CD4-positive, alpha-beta T cell (primary cell): ENCODE measurements at regions of chr6 and their contacts with region 1.

Region 1: GRCh38 chr6:26156076-26156849 is 69.0 kb downstream of the HFE start:
- DNase-seq: peak; percentile 76 to 94 (median 88)
- ATAC-seq: peak; percentile 33
- H3K4me3 ChIP-seq: peak overlapping the region; percentile 92
- H3K4me3 Mint-ChIP-seq: peak overlapping the region; percentile 99
- H3K27ac ChIP-seq: peak overlapping the region; percentile 67 to 91
- H3K27ac Mint-ChIP-seq: peak overlapping the region; percentile 97
- H3K4me1 ChIP-seq: peaks cover 37% of the 10 kb centered on the region
- H3K4me1 Mint-ChIP-seq: peaks cover 40% of the 10 kb centered on the region
- H3K27me3 ChIP-seq: no peaks in the 10 kb centered on the region
- H3K27me3 Mint-ChIP-seq: peaks cover 12% of the 10 kb centered on the region
- CTCF ChIP-seq: no peak

Region 2: GRCh38 chr6:26031595-26032339 is 124.5 kb before region 1 on chr6:
- CTCF ChIA-PET with region 1: no interaction called
- POLR2A ChIA-PET with region 1: interaction called, 161 read pairs
- intact Hi-C with region 1: loop called in 1 of 2 experiments (anchors 2 kb)
- DNase-seq: peak; percentile 73 to 94 (median 81)
- ATAC-seq: peak; percentile 65
- H3K4me3 ChIP-seq: peak overlapping the region; percentile 64
- H3K4me3 Mint-ChIP-seq: peak overlapping the region; percentile 97
- H3K27ac ChIP-seq: peak overlapping the region; percentile 42 to 72
- H3K27ac Mint-ChIP-seq: peak overlapping the region; percentile 99
- H3K4me1 ChIP-seq: peaks cover 35% of the 10 kb centered on the region
- H3K4me1 Mint-ChIP-seq: peaks cover 46% of the 10 kb centered on the region
- H3K27me3 ChIP-seq: no peaks in the 10 kb centered on the region
- H3K27me3 Mint-ChIP-seq: no peaks in the 10 kb centered on the region
- CTCF ChIP-seq: peak; percentile 22

Region 3: DNA sequence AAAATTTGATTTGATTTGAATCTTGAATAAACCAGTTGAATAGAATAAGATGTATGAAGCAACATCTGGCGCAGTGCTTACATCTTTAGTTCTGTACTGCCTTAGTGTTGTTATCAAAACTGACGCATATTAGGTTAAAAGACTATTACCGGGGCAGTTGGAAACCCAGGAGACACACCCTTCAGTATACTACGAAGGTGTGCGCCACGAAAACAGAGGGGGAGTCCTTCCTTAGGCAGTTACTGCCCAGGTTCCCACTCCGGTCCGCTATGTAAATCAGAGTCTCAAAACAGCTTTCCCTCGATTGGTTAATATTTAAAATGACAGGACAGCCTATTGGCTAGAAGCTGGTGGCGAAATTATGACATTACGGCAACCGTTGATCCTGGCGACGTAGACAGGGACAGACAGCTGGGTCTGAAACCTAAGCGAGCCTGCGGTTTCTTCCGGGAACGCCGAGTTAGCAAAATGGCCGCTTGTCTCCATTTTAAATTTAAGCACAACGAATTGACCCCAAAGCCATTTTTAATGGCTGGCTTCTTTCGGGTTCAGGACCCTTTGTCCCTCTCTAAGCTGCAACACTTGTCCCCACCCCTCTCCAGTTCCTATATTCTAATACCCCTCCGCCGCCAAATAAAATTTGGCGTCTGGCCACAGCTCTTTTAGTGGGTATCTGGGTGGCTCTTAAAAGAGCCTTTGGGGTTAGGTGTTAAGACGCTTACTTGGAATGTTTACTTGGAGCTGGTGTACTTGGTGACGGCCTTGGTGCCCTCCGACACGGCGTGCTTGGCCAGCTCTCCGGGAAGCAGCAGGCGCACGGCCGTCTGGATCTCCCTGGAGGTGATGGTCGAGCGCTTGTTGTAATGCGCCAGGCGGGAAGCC is 33.2 kb before region 1 on chr6:
- CTCF ChIA-PET with region 1: interaction called, 28 read pairs
- POLR2A ChIA-PET with region 1: interaction called, 3,030 read pairs
- intact Hi-C with region 1: loop called (anchors 1 kb)
- DNase-seq: peak; percentile 75 to 98 (median 92)
- ATAC-seq: peak; percentile 56
- H3K4me3 ChIP-seq: peak overlapping the region; percentile 88
- H3K4me3 Mint-ChIP-seq: peak overlapping the region; percentile 97
- H3K27ac ChIP-seq: peak overlapping the region; percentile 84 to 95
- H3K27ac Mint-ChIP-seq: peak overlapping the region; percentile 98
- H3K4me1 ChIP-seq: peaks cover 23% of the 10 kb centered on the region
- H3K4me1 Mint-ChIP-seq: peaks cover 41% of the 10 kb centered on the region
- H3K27me3 ChIP-seq: no peaks in the 10 kb centered on the region
- H3K27me3 Mint-ChIP-seq: peaks cover 13% of the 10 kb centered on the region
- CTCF ChIP-seq: no peak

Region 4: DNA sequence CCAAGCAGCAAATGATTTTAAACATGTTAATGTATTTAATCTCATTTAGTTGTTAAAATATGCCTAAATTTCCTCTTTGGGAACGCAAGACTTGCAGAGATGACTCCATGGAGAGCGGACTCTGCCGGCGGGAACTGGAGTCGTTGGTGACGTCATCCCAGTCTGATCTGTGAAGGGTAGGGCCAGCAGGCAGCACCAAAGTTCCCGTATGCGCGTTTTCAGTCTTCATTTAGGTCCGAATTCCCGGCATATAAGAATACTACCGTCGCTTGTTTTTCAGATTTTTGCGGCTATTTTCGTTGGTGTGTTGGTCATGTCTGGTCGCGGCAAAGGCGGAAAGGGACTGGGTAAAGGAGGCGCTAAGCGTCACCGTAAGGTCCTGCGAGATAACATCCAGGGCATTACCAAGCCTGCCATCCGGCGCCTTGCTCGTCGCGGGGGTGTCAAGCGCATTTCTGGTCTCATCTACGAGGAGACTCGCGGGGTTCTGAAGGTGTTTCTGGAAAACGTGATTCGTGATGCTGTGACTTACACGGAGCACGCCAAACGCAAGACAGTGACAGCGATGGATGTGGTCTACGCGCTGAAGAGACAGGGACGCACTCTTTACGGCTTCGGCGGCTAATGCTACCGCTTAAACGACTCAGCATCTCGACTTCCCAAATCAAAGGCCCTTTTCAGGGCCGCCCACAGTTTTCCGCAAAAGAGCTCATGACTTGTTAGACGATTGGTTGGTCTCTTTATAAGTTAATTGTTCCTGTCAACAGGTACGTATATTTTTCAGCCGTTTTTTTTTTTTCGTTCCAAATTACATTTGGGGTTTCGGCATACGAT is 48.3 kb after region 1 on chr6:
- CTCF ChIA-PET with region 1: interaction called, 3 read pairs
- POLR2A ChIA-PET with region 1: interaction called, 1,305 read pairs
- intact Hi-C with region 1: loop called (anchors 1 to 2 kb)
- DNase-seq: peak; percentile 73 to 98 (median 80)
- ATAC-seq: peak; percentile 69
- H3K4me3 ChIP-seq: peak overlapping the region; percentile 68
- H3K4me3 Mint-ChIP-seq: no peak overlapping the region
- H3K27ac ChIP-seq: peak overlapping the region; percentile 89 to 90
- H3K27ac Mint-ChIP-seq: no peak overlapping the region
- H3K4me1 ChIP-seq: peaks cover 34% of the 10 kb centered on the region
- H3K4me1 Mint-ChIP-seq: peaks cover 8% of the 10 kb centered on the region
- H3K27me3 ChIP-seq: no peaks in the 10 kb centered on the region
- H3K27me3 Mint-ChIP-seq: no peaks in the 10 kb centered on the region
- CTCF ChIP-seq: peak; percentile 32

Region 5: DNA sequence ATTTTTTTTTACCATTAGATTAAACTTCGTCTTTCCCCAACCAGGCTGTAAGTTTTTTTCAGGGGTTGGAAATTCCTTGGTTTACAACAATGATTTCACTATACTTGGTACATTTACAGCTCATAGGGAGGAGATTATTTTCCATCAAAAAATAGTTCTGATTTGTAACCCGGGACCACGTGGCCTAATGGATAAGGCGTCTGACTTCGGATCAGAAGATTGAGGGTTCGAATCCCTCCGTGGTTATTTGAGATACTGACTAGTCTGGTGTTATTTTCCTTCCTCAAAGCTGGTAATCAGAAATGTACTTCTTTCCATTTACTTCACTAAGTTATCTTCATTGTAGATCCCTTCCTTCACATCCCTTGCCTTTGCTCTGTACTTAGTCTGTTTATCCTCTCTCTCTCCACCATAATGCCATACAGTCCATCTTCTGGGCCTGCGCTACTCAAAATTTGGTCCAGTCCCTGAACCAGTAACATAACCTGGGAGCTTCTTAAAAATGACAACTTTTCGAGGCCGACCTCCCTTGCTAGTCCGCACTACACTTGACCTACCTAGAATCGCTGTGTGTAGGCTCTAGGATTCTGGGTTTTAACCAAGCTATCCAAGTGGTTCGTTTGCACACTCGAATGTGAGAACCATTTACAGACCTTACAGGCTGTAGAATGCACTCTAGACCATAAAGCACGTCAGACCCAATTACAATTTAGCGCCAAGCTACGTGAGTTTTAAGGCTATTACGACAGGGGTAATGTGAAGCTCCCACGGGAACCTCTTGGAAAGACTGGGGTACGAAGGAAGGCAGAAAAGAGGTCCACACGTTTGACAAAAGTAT is 166.6 kb after region 1 on chr6:
- CTCF ChIA-PET with region 1: interaction called, 3 read pairs
- POLR2A ChIA-PET with region 1: interaction called, 13 read pairs
- intact Hi-C with region 1: no loop called
- DNase-seq: peak in 10 of 14 experiments; percentile 20 to 88 (median 52)
- ATAC-seq: peak; percentile 75
- H3K4me3 ChIP-seq: peak overlapping the region; percentile 54
- H3K4me3 Mint-ChIP-seq: peak overlapping the region; percentile 96
- H3K27ac ChIP-seq: no peak overlapping the region
- H3K27ac Mint-ChIP-seq: peak overlapping the region; percentile 93
- H3K4me1 ChIP-seq: peaks cover 23% of the 10 kb centered on the region
- H3K4me1 Mint-ChIP-seq: peaks cover 30% of the 10 kb centered on the region
- H3K27me3 ChIP-seq: no peaks in the 10 kb centered on the region
- H3K27me3 Mint-ChIP-seq: peaks cover 35% of the 10 kb centered on the region
- CTCF ChIP-seq: no peak

Region 6: DNA sequence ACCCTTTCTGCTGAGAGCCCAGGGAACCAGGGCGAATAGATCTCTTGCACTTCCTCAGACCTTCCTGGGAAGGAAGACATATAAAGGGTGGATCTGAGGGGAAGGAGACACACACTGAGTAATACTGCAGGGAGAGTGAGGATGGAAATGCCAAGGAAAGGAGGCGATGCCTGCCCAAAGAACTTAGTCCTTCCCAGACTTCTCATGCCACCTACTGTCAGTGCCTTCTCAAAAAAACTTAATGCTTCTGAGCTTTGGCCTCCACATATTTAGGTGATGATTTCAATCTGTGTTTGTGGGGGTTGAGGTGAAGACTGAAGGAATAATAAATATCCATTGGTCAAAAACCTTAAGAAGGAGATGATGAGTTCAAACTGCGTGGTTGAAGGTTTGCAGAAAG is 255.5 kb after region 1 on chr6:
- CTCF ChIA-PET with region 1: no interaction called
- POLR2A ChIA-PET with region 1: no interaction called
- intact Hi-C with region 1: no loop called
- DNase-seq: no peak
- ATAC-seq: no peak
- H3K4me3 ChIP-seq: no peak overlapping the region
- H3K4me3 Mint-ChIP-seq: no peak overlapping the region
- H3K27ac ChIP-seq: no peak overlapping the region
- H3K27ac Mint-ChIP-seq: no peak overlapping the region
- H3K4me1 ChIP-seq: peaks cover 19% of the 10 kb centered on the region
- H3K4me1 Mint-ChIP-seq: peaks cover 25% of the 10 kb centered on the region
- H3K27me3 ChIP-seq: no peaks in the 10 kb centered on the region
- H3K27me3 Mint-ChIP-seq: no peaks in the 10 kb centered on the region
- CTCF ChIP-seq: no peak

Region 7: GRCh38 chr6:27146706-27147505 is 990.6 kb after region 1 on chr6:
- CTCF ChIA-PET with region 1: no interaction called
- POLR2A ChIA-PET with region 1: interaction called, 112 read pairs
- intact Hi-C with region 1: loop called in 1 of 2 experiments (anchors 5 kb)
- DNase-seq: peak; percentile 61 to 99 (median 72)
- ATAC-seq: peak; percentile 86
- H3K4me3 ChIP-seq: peak overlapping the region; percentile 69
- H3K4me3 Mint-ChIP-seq: no peak overlapping the region
- H3K27ac ChIP-seq: peak overlapping the region; percentile 84 to 97
- H3K27ac Mint-ChIP-seq: no peak overlapping the region
- H3K4me1 ChIP-seq: peaks cover 17% of the 10 kb centered on the region
- H3K4me1 Mint-ChIP-seq: peaks cover 11% of the 10 kb centered on the region
- H3K27me3 ChIP-seq: no peaks in the 10 kb centered on the region
- H3K27me3 Mint-ChIP-seq: no peaks in the 10 kb centered on the region
- CTCF ChIP-seq: no peak